ENCODE measurements at regions of chr14 and their contacts with region 1.

Region 1: DNA sequence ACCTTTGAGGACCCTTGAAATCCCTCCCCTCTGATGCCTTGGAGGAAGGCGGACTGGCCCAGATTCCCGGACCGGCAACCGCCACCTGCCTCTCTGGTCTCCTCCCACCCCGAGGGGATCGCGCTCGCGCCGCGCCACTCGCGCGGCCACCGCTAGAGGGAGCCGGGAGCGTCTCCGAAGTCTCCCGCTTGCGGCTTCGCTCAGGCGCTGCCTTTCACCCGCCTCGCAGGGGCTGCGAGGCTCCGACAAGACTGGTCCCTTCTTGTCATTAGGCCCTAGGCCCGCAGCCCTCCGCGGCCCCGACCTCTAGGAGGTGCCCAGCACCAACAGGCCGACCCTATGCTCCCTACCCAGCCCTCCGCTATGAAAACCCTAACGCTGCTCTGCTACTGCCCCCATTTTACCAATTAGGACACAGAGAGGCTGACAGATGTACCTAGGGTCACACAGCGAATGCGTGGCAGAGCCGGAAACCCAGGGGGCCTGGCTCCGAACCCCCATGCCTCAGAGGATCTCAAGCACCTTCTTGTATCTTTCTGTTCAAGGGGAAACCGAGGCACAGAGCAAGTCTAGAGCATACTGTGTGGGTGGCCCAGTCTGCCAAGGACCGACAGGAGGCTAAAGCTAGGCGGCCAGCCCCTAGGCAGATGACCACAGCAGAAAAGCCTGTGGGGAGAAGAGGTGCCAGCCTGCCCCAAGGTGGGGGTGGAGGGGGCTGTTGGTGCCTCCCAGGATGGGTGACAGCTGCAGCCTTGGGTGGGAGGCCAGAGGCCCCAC is 21.4 kb upstream of the VSX2 start:
- DNase-seq: peak; percentile 6 to 42
- ATAC-seq: peak; percentile 56 to 92
- H3K4me3 ChIP-seq: peak overlapping the region in 3 of 4 donors; percentile 9 to 39 (median 35)
- H3K27ac ChIP-seq: no peak overlapping the region
- H3K4me1 ChIP-seq: peaks cover 0 to 5% of the 10 kb centered on the region in 2 donors
- H3K27me3 ChIP-seq: peaks cover 0 to 10% (median 9%) of the 10 kb centered on the region in 3 donors
- CTCF ChIP-seq: peak; percentile 63 to 90 (median 78)
- POLR2A ChIP-seq: no peak

Region 2: GRCh38 chr14:74238974-74239847 is 21.4 kb after region 1 on chr14 and contains the start of gene VSX2:
- in situ Hi-C with region 1: no loop called
- intact Hi-C with region 1: no loop called
- DNase-seq: no peak
- ATAC-seq: no peak
- H3K4me3 ChIP-seq: peak within 1 kb of the TSS; percentile 36 to 56 (median 44)
- H3K27ac ChIP-seq: no peak within 1 kb of the TSS
- H3K4me1 ChIP-seq: peaks cover 12 to 22% of the 10 kb centered on the region in 2 donors
- H3K27me3 ChIP-seq: peaks cover 63 to 76% (median 74%) of the 10 kb centered on the region in 3 donors
- CTCF ChIP-seq: no peak
- POLR2A ChIP-seq: no peak
- total RNA-seq, gene VSX2: not detected

Region 3: GRCh38 chr14:74249433-74250375 is 31.8 kb after region 1 on chr14:
- in situ Hi-C with region 1: no loop called
- intact Hi-C with region 1: loop called (anchors 5 kb)
- DNase-seq: no peak
- ATAC-seq: no peak
- H3K4me3 ChIP-seq: no peak overlapping the region
- H3K27ac ChIP-seq: no peak overlapping the region
- H3K4me1 ChIP-seq: no peaks in the 10 kb centered on the region
- H3K27me3 ChIP-seq: peaks cover 0 to 5% (median 0%) of the 10 kb centered on the region in 3 donors
- CTCF ChIP-seq: no peak
- POLR2A ChIP-seq: no peak

Region 4: GRCh38 chr14:74261288-74261687 is 43.4 kb after region 1 on chr14:
- in situ Hi-C with region 1: no loop called
- intact Hi-C with region 1: no loop called
- DNase-seq: no peak
- ATAC-seq: no peak
- H3K4me3 ChIP-seq: no peak overlapping the region
- H3K27ac ChIP-seq: no peak overlapping the region
- H3K4me1 ChIP-seq: peaks cover 3 to 13% of the 10 kb centered on the region in 2 donors
- H3K27me3 ChIP-seq: peaks cover 10 to 13% (median 11%) of the 10 kb centered on the region in 3 donors
- CTCF ChIP-seq: no peak
- POLR2A ChIP-seq: no peak

Region 5: GRCh38 chr14:74290415-74290814 is 72.6 kb after region 1 on chr14:
- in situ Hi-C with region 1: no loop called
- intact Hi-C with region 1: no loop called
- DNase-seq: no peak
- ATAC-seq: no peak
- H3K4me3 ChIP-seq: no peak overlapping the region
- H3K27ac ChIP-seq: no peak overlapping the region
- H3K4me1 ChIP-seq: peaks cover 4 to 7% of the 10 kb centered on the region in 2 donors
- H3K27me3 ChIP-seq: no peaks in the 10 kb centered on the region
- CTCF ChIP-seq: no peak
- POLR2A ChIP-seq: no peak

Measured in gastrocnemius medialis (tissue), 4 donors.